GM13976 (cell line): ENCODE measurements at regions of chr6 and their contacts with region 1.

Region 1: DNA sequence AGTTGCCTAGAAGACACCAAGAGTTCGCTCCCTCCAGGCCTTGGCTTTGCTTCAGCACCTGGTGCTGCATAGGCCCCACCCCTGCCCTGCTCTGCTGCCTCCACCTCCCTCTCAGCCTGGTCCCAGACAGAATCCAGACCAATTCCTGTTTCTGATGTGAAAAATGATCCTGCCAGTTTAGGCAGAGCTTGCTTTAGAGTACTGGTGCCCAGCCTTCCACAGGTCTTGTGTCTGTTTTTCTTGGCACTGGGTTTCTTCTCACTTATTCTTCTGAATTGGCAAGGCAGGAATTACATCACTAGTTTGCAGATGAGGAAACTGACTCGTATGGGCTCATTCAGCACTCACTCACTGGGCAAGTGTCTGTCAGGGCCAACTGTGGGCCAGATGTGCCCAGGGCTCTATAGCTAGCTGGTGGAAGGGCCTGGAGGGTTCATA is 53.0 kb downstream of the HLA-A start:
- DNase-seq: no peak
- CTCF ChIP-seq: no peak

Region 2: GRCh38 chr6:29847871-29848630 is 147.3 kb before region 1 on chr6:
- in situ Hi-C with region 1: loop called (anchors 10 kb)
- DNase-seq: peak; percentile 78
- CTCF ChIP-seq: peak; percentile 88

Region 3: DNA sequence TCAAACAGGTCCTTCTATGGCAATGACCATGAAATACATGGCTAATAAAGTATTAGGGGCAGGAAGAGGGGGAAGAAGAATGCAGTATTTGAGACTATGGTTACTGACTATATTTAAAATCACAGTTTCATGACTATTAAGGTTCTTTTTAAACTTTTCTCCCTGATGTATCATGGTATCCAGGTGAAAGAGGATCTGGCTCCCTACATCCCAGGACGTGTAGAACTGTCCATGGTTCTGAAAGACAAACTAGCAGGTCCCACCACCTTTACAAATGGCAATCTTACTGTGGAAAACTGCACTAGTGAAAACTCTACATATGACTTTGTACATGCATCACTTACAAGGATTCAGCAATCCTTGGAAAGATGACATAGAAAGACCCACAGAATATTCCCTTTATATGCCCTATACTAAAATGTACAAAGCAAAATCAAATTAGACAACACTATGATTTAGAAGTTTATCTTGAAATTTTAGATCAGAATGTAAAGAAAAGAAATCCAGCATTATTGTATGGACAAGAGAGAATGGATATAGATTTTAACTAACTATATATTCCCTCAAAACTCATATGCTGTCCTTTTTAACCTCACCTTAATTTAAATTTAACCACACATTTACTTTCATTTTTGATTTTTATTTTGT is 383.1 kb after region 1 on chr6:
- in situ Hi-C with region 1: no loop called
- DNase-seq: no peak
- CTCF ChIP-seq: no peak